ENCODE measurements at regions of chr12 and their contacts with region 1.

Region 1: GRCh38 chr12:56359851-56360767 is at the start of gene STAT2:
- DNase-seq: peak; percentile 95

Region 2: DNA sequence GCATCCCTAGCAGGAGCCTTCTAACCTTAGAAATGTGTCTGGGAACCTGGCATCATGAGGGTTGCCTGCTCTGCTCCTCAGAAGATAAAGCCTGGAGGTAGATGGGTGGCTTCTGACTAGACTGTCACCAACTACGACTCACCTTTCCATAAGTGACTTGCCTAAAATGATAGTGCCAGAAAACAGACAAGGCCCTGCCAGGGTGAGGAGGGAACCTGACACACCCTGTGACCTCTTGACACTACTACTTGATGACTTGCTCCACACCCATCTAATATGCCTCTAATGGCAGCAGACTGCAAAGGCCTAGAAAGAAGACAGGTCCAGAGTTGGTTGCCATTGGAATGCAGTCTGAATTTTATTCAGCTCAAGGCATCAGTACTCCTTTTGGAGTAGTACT is 147.7 kb before region 1 on chr12:
- CTCF ChIA-PET with region 1: no interaction called
- POLR2A ChIA-PET with region 1: no interaction called
- DNase-seq: no peak

Region 3: DNA sequence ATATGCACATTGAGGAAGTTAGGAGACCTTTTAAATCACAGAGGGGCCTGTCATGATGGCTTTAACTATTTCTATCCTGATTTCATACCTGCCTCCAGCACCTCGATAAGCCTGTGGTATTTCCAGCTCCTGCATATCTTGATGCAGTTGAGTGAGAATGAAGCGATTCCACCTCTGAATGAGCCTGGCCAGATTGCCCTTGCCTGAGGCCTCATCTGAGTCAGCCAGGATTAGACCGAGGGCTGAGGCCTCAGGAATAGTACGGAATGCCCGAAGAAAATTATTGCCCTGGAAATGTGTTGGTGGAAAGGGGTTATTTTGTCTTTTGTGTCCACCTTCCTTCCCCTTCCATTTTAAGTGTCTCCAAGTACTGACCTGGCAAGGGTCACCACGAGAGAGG is 35.9 kb before region 1 on chr12:
- CTCF ChIA-PET with region 1: no interaction called
- POLR2A ChIA-PET with region 1: interaction called, 11 read pairs
- DNase-seq: no peak

Region 4: GRCh38 chr12:56341616-56342015 is 18.5 kb before region 1 on chr12:
- CTCF ChIA-PET with region 1: interaction called, 5 read pairs
- POLR2A ChIA-PET with region 1: interaction called, 20 read pairs
- DNase-seq: no peak

Region 5: GRCh38 chr12:56377310-56377988 is 17.3 kb after region 1 on chr12:
- CTCF ChIA-PET with region 1: interaction called, 3 read pairs
- POLR2A ChIA-PET with region 1: interaction called, 13 read pairs
- DNase-seq: no peak

Region 6: DNA sequence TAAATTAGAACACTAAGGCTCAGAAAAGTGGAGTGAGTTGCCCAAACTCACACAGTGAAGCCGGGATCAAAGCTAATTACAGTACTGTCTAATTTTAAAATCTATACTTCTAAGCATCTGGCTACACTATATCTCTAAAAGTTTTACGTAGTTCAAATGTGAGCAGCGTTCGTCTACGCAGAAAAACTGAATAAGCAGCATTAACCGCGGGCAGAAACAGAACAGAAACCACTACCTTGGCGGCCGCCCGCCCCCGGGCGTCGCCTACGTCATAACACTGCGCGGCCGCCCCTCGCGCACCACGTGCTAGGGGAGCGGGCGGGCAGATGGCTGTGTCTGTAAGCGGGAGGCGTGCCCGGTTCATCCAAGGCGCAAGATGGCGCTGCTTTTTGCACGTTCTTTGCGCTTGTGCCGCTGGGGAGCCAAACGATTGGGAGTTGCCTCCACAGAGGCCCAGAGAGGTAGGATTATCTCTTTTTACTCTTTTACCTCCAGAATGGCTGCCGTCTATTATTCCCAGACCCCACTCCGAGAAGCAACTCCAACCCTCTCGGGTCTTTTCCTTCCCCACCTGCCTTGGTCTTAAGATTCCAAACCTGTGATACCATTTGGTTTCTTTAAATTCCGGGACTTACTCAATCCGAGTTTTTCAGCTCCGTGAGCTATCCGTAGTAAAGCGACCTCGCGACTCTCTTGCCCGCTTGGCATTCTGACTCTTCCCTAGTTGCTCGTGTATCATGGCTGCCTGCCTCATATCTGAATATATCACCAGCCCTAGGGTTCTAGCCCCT is 108.3 kb after region 1 on chr12 and contains the start of gene SPRYD4:
- CTCF ChIA-PET with region 1: interaction called, 6 read pairs
- POLR2A ChIA-PET with region 1: interaction called, 12 read pairs
- DNase-seq: peak; percentile 96

Region 7: GRCh38 chr12:56626701-56627100 is 266.6 kb after region 1 on chr12:
- CTCF ChIA-PET with region 1: no interaction called
- POLR2A ChIA-PET with region 1: no interaction called
- DNase-seq: no peak